ENCODE measurements at regions of chr1 and their contacts with region 1.

Region 1: GRCh38 chr1:117059678-117060440 is at the start of gene TTF2:
- DNase-seq: peak; percentile 99
- H3K4me3 Mint-ChIP-seq: no peak within 1 kb of the TSS
- H3K27ac Mint-ChIP-seq: no peak within 1 kb of the TSS
- H3K4me1 Mint-ChIP-seq: peaks cover 41% of the 10 kb centered on the region
- H3K27me3 Mint-ChIP-seq: no peaks in the 10 kb centered on the region
- total RNA-seq, gene TTF2: 108 and 116 TPM in 2 replicates

Region 2: DNA sequence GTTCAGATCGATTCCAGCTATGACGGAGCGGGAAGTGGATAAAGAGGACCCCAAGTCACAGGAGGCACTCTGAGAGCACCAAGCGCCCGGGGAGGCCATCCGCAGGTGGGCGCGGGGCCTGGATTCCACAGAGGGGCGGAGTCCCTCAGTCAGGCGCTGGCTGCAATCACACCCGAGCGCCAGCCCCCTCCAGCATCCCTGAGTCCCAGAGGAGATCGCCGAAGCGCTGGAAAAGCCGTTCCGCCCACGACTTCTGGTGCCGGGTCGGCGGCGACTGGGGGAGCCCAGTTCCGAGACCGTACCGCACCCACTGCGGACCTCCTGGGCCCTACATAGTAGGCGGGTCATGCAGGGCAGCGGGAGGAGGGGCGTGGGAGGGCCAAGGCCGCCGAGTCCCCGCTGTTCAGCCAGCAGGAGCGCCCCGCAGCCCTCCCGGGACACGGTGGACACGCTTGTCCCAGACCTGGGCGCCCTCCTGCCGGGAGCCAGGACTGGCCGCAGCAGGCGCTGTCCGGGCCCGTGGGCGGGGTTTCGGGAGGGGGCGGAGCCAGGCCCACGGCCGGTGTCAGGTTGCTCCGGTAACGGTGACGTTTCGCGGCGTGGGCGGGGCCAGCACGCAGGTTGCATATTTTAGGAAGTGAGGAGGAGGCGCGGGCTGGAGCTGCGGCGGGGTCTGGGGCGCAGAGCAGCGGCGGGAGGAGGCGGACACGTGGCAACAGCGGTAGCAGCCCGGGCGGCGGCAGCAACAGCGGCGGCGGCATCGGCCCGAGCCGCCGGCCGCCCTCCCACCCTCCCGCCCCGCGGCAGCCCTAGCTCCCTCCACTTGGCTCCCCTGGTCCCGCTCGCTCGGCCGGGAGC is 687.0 kb before region 1 on chr1 and contains the start of gene ATP1A1:
- intact Hi-C with region 1: loop called (anchors 1 kb)
- DNase-seq: peak; percentile 99
- H3K4me3 Mint-ChIP-seq: peak within 1 kb of the TSS; percentile 96
- H3K27ac Mint-ChIP-seq: peak within 1 kb of the TSS; percentile 96
- H3K4me1 Mint-ChIP-seq: peaks cover 32% of the 10 kb centered on the region
- H3K27me3 Mint-ChIP-seq: peaks cover 22% of the 10 kb centered on the region
- total RNA-seq, gene ATP1A1: 252 and 261 TPM in 2 replicates

Region 3: GRCh38 chr1:116556289-116557006 is 503.4 kb before region 1 on chr1:
- intact Hi-C with region 1: loop called (anchors 1 kb)
- DNase-seq: peak; percentile 88
- H3K4me3 Mint-ChIP-seq: peak overlapping the region; percentile 19
- H3K27ac Mint-ChIP-seq: peak overlapping the region; percentile 86
- H3K4me1 Mint-ChIP-seq: peaks cover 69% of the 10 kb centered on the region
- H3K27me3 Mint-ChIP-seq: no peaks in the 10 kb centered on the region

Region 4: DNA sequence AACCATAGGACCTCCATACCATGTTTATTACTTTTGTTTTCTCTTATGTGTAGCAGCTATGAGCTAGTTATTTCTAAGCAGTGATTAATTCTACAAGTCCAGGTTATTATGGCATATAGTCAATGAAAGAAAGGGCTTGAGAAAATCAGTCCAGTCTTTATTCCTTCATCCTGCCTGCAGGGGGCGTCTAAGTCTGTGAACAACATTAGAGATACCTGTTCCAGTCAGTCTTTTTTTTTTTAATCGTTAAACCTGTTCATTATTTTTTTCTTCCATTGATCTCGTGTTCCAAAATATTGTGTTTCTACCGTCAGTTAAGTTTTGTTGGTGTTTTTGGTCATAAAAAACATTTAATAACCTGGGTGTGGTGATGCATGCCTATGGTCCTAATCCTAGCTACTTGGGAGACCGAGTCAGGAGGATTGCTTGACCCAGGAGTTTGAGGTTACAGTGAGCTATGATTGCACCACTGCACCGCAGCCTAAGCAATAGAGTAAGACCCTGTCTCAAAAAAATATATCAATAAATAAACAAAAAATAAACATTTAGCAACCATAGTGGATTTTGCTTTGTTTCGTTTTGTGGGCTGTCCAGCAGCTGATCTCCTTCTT is 335.0 kb before region 1 on chr1:
- intact Hi-C with region 1: loop called (anchors 1 kb)
- DNase-seq: peak; percentile 92
- H3K4me3 Mint-ChIP-seq: no peak overlapping the region
- H3K27ac Mint-ChIP-seq: no peak overlapping the region
- H3K4me1 Mint-ChIP-seq: peaks cover 30% of the 10 kb centered on the region
- H3K27me3 Mint-ChIP-seq: no peaks in the 10 kb centered on the region

Region 5: DNA sequence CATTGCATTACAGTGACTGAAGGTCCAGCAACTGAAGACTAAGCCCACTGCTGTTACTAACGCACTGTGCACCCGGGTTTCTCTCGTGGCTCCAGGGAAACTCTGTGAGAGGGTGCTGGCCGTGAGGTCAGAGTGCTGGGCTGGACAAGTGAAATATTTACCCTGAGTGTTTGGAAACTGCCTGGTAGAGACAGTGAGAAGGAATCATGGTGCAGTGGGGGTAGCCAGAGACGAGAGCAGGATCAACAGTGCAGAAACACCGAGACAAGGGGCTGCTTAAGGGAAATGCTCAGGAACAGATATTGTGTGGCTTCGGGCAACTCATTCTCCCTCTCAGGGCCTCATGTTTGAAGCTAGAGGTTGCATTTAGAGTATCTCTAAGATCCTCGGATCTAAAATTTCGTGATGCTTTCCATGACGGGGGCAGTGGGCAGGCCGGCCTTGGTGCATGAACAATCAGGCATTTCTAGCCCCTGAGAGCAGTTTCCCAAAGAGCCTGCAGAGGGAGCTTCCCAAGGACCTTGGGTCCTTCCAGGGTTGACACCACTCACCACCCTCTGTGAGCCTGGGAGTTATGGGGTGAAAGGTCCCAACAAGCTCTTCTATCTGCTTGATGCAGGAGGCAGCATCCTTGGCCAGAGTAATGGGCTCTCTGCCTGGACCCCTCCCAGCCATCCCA is 295.9 kb before region 1 on chr1:
- intact Hi-C with region 1: loop called (anchors 1 kb)
- DNase-seq: peak; percentile 86
- H3K4me3 Mint-ChIP-seq: peak overlapping the region; percentile 98
- H3K27ac Mint-ChIP-seq: peak overlapping the region; percentile 99
- H3K4me1 Mint-ChIP-seq: peaks cover 85% of the 10 kb centered on the region
- H3K27me3 Mint-ChIP-seq: no peaks in the 10 kb centered on the region

Region 6: DNA sequence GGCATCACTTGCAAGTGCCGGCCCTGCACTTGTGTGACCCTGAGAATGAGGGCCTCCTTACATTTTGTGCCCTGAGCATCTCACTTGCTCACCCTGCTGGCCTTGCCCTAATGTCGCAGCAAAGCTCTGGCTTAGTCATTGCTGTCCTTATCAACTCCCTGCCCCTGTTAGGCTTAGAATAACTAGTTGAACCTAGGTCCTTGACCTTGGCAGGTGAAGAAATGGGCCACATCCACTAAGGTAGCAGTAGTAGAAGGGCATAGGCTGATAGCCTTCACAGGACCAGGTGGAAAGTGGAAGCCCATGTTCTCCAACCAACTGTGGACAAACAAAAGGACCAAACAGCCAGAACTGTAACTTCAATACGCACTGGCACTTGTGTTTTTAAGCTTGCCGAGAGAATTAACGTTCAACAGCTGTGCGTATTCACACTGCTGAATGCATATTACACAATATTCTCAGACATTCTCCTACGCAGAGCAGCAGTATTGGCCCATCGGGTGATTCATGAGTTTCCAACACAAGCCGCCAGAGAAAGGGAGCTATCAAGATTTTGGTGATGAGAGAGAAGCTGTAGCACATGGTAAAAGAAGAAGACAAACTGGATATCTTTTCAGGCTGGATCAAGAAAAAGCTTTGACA is 177.9 kb before region 1 on chr1:
- intact Hi-C with region 1: loop called (anchors 2 kb)
- DNase-seq: peak; percentile 82
- H3K4me3 Mint-ChIP-seq: no peak overlapping the region
- H3K27ac Mint-ChIP-seq: no peak overlapping the region
- H3K4me1 Mint-ChIP-seq: peaks cover 28% of the 10 kb centered on the region
- H3K27me3 Mint-ChIP-seq: no peaks in the 10 kb centered on the region

Region 7: DNA sequence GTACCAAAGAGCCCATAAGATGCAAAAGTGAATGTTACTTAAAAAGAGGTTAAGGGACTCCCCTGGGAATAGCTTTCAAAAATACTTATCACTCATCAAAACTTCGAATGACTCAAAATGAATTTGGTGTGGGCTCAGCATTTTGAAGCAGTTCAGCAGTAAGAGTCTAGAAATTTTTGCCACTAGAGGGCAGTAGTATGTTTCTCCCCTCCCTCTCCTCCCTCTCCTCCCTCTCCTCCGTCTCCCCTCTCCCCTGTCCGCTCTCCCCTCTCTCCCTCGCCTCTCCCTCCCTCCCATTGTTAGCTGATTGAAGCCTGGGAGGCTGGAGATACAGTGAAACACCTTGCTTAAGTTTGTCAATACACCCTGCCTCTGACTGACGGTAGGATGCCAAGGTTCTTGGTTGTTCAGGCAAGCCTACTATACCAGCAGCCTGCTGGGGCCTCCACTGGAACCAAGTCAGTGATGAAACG is 475.2 kb after region 1 on chr1:
- intact Hi-C with region 1: loop called (anchors 1 kb)
- DNase-seq: peak; percentile 81
- H3K4me3 Mint-ChIP-seq: no peak overlapping the region
- H3K27ac Mint-ChIP-seq: peak overlapping the region; percentile 41
- H3K4me1 Mint-ChIP-seq: peaks cover 13% of the 10 kb centered on the region
- H3K27me3 Mint-ChIP-seq: no peaks in the 10 kb centered on the region

Measured in activated CD4-positive, alpha-beta T cell treated with anti-CD3 and anti-CD28 coated beads, Interleukin-2, amount 10 ng/mL, durations not matched to agents 24 days and 14 days (primary cell).